ENCODE measurements at regions of chr16 and their contacts with region 1.

Region 1: DNA sequence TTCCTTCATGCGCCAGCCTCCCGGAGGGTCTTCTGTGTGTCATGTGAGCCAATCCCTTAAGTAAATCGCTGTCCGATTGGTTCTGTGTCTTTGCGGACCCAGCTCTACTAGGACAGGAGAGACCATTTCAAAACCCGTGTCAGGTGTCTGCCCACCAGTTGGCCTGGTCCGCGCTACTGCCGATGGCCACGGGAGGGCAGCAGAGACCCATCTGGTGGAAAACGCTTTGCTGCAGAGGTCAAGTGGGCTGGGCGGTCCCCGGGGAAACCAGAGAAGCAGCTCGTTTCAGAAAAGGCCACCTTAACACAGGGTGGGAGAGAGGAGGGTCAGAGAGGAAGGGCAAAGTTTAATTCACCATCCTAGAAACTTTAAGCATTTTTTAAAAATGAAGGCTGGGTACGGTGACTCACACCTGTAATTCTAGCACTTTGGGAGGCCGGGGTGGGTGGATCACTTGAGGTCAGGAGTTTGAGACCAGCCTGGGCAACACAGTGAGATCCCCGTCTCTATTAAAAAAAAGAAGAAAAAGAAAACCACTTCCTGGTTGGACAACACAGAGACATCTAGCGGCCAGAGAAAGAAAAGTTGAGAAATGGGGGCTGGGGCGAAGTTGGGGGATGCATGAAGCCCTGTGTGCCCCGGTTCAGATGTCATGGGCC is 2.8 kb upstream of the CIBAR2 start:
- DNase-seq: peak; percentile 61
- H3K4me3 ChIP-seq: no peak overlapping the region
- H3K27ac ChIP-seq: no peak overlapping the region
- H3K4me1 ChIP-seq: no peaks in the 10 kb centered on the region
- H3K27me3 ChIP-seq: no peaks in the 10 kb centered on the region
- CTCF ChIP-seq: peak; percentile 96 to 100

Region 2: GRCh38 chr16:85245307-85246172 is 130.5 kb after region 1 on chr16:
- CTCF ChIA-PET with region 1: no interaction called
- dilution Hi-C with region 1: no loop called
- in situ Hi-C with region 1: no loop called
- intact Hi-C with region 1: loop called (anchors 1 kb)
- DNase-seq: peak; percentile 38
- H3K4me3 ChIP-seq: no peak overlapping the region
- H3K27ac ChIP-seq: no peak overlapping the region
- H3K4me1 ChIP-seq: no peaks in the 10 kb centered on the region
- H3K27me3 ChIP-seq: no peaks in the 10 kb centered on the region
- CTCF ChIP-seq: peak; percentile 60 to 92

Region 3: DNA sequence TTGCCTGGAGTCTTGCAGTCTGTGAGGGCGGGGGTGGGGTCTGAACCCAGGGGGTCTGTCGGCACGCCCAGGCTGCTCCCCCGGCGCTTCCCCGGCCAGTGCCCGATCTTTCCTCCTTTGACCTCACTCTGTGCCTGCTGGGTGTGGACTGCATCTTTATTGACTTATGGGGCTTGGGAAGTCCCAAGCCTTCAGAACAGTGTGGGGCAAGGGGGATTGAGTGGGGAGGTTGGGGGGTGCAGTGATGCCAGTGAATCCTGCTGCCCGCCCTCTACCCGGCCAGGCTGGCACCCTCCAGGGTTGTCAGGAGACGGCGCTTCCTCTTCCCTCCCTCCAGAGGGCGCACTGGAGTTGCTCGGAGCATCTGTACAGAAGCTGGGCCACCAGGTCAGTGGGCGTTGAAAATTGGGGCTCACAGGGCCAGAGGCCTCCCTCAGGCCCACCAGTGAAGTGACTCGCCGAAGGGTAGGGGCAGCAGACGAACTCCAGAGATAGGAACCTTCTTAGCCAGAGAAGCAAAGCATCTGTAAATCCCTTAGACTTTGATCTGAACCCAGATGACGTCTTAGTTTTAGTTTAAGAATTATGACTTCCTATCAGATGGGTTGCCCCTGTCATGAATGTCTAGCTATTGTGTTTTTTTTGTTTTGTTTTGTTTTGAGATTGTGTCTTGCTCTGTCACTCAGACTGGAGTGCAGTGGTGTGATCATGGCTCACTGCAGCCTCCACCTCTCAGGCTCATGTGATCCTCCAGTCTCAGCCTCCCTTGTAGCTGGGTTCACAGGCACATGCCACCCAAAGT is 182.0 kb after region 1 on chr16:
- CTCF ChIA-PET with region 1: no interaction called
- dilution Hi-C with region 1: no loop called
- in situ Hi-C with region 1: no loop called
- intact Hi-C with region 1: loop called (anchors 2 kb)
- DNase-seq: no peak
- H3K4me3 ChIP-seq: no peak overlapping the region
- H3K27ac ChIP-seq: no peak overlapping the region
- H3K4me1 ChIP-seq: no peaks in the 10 kb centered on the region
- H3K27me3 ChIP-seq: no peaks in the 10 kb centered on the region
- CTCF ChIP-seq: peak; percentile 62 to 87

Region 4: GRCh38 chr16:85393674-85394483 is 278.8 kb after region 1 on chr16:
- CTCF ChIA-PET with region 1: no interaction called
- dilution Hi-C with region 1: no loop called
- in situ Hi-C with region 1: no loop called
- intact Hi-C with region 1: loop called (anchors 5 kb)
- DNase-seq: no peak
- H3K4me3 ChIP-seq: no peak overlapping the region
- H3K27ac ChIP-seq: no peak overlapping the region
- H3K4me1 ChIP-seq: peaks cover 54% of the 10 kb centered on the region
- H3K27me3 ChIP-seq: no peaks in the 10 kb centered on the region
- CTCF ChIP-seq: peak; percentile 31 to 49

Region 5: DNA sequence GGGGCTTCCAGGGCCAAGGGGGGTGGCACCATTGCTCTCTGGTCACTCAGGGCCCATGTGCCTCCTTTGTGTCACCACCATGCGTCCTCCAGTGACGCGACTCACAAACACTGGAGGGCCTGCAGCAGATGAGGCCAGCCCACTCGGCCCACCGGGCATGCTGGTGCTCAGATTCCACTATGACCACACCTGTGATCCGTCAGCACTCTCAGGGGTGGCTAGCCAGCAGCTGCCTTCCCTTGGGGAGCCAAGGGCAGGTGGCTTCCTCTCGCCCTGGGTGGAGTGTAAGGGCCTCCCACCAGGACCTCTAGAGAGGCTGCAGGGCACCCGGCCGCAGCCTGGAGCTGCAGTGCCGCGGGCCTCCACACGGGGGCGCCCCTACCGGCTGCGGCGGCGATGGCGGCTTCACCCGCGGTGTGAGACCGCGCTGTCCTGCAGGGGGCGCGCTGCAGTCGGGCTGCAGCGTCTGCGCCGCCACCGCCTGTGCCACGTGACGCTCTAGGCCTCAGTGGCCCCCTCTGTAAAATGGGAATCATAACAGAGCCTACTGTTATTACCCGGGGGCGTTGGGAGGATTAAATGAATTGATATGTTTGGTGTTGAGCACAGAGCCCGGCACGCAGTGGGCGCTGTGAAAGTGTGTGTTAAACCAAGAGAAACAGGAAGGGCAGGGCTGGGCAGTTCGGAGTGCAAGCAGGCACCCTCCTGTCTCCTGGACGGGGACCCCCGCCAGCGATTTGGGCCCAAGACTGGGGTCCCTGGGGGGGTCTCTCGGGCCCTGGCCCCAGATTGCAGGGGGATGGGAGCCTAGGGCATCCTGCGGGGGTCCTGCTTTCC is 305.7 kb after region 1 on chr16:
- CTCF ChIA-PET with region 1: no interaction called
- dilution Hi-C with region 1: no loop called
- in situ Hi-C with region 1: no loop called
- intact Hi-C with region 1: loop called (anchors 10 kb)
- DNase-seq: peak; percentile 20
- H3K4me3 ChIP-seq: no peak overlapping the region
- H3K27ac ChIP-seq: no peak overlapping the region
- H3K4me1 ChIP-seq: no peaks in the 10 kb centered on the region
- H3K27me3 ChIP-seq: no peaks in the 10 kb centered on the region
- CTCF ChIP-seq: peak; percentile 82 to 90

Measured in mammary epithelial cell (primary cell).